Activated B cell treated with CpG ODN at 0.5 μM for 24 hours (primary cell): ENCODE measurements at regions of chr10 and their contacts with region 1.

Region 1: DNA sequence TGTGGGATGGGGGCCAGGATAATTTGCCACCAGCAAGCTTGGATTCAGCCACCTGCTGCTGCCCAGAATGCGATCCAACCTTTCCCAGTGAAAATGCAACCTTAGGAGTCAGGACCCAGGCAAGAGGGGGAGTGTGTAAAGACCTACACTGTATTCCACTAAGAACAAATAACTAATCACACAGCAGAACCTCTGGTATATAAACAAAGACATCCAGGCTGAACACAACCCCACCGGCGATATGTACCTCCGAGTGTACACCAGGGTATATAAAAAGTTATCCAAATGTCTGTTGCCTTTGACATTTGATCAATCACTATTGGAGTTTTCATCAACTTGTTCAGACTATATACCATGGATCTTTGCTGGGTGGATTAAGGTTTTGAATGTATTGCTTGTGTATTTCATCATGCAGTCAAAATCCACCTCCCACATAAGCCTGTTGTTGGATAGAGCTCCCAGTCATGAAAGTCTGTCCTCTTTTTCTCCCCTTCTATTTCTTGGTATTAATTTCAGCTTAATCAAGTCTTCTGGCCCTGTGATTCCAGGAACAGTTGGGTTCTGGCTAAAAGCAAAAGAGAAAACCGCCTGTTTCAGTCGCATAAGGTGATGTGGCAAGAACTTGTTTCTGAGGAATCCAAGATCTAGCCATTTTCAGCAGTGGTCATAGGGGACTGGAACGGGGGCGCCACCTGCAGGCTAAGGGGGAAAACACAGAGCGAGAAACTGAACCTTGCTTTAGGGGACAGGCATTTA is 290.7 kb downstream of the CCDC3 start:
- DNase-seq: peak; percentile 68
- ATAC-seq: peak; percentile 93
- H3K4me3 Mint-ChIP-seq: no peak overlapping the region
- H3K27ac Mint-ChIP-seq: peak overlapping the region; percentile 54
- H3K4me1 Mint-ChIP-seq: peaks cover 23% of the 10 kb centered on the region
- H3K27me3 Mint-ChIP-seq: no peaks in the 10 kb centered on the region
- CTCF ChIP-seq: no peak

Region 2: DNA sequence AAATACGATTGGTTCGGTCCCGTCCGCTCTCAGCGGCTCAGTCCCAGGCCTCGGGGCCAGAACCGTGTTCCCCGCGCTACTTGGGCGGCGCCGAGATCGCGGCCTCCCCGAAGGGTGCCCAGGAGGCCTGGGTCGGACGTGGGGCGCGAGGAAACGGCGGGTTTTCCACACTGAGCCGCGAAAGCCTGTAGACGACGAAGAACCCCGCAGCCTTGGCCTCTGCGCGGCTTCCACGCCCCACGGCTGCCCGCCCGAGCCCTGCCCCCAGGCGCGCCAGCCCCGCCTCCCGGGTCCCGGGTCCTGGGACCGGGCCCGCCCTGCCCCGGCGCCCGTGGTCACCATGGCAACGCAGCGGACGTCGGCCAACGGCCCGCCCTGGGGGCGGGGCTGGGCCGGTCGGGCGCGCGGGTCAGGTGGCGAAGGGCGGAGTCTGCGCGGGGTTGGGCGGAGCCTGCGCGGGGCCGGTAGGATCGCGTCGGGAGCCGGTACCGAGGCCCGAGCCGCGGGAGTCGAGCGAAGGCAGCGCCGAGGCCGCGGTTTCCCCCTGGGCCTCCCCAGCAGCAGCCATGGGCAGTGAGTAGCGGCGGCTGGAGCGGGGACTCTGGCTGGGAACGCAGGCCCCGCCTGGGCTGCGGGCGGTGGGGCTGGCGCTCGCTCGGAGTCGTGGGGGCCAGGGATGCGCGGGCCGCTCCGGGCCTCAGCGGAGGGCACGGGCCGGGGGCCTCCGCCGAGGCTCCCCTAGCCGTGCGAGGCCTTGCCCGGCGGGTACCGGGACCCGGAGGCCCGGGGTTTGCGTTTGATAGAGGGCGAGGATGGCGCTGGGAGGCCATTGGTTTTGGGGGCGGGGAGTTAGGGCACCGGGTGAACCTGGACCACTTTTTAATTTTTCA is 581.3 kb before region 1 on chr10 and contains the start of gene SEC61A2:
- CTCF ChIA-PET with region 1: no interaction called
- POLR2A ChIA-PET with region 1: no interaction called
- intact Hi-C with region 1: loop called (anchors 1 kb)
- DNase-seq: peak; percentile 100
- ATAC-seq: peak; percentile 89
- H3K4me3 Mint-ChIP-seq: peak within 1 kb of the TSS; percentile 90
- H3K27ac Mint-ChIP-seq: peak within 1 kb of the TSS; percentile 88
- H3K4me1 Mint-ChIP-seq: peaks cover 15% of the 10 kb centered on the region
- H3K27me3 Mint-ChIP-seq: no peaks in the 10 kb centered on the region
- CTCF ChIP-seq: no peak
- total RNA-seq, gene SEC61A2: 13.3 and 20.8 TPM in 2 replicates

Region 3: GRCh38 chr10:12252882-12253546 is 457.8 kb before region 1 on chr10:
- CTCF ChIA-PET with region 1: interaction called, 17 read pairs
- POLR2A ChIA-PET with region 1: no interaction called
- intact Hi-C with region 1: loop called (anchors 1 kb)
- DNase-seq: no peak
- ATAC-seq: peak; percentile 98
- H3K4me3 Mint-ChIP-seq: peak overlapping the region; percentile 55
- H3K27ac Mint-ChIP-seq: peak overlapping the region; percentile 74
- H3K4me1 Mint-ChIP-seq: peaks cover 10% of the 10 kb centered on the region
- H3K27me3 Mint-ChIP-seq: no peaks in the 10 kb centered on the region
- CTCF ChIP-seq: peak; percentile 21

Region 4: DNA sequence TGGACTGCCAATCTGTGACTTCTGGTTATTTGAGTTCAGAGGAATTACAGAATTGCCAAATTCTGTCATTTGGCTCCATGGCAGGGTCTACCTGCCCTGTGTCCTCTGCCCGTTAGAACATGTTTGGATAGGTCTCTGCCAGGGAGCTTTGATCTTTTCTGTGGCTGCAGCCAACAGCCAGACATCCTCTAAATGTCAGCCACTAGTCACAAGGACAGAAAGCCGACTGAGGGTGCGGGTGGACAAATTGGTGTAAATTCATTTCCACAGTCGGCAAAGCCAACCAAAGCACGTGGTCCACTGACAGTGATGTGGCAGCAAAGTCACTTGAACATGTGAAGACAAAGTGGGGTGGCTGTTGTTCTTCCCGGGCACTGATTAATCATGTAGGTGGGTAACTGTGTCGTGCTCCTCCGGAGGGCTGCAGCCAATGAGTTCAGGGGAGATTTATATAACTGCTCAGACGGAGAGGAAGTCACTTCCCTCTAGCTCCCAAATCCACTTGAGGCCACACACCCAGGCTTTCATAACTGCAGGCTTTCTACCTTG is 388.1 kb before region 1 on chr10:
- CTCF ChIA-PET with region 1: no interaction called
- POLR2A ChIA-PET with region 1: no interaction called
- intact Hi-C with region 1: loop called (anchors 1 kb)
- DNase-seq: no peak
- ATAC-seq: no peak
- H3K4me3 Mint-ChIP-seq: peak overlapping the region; percentile 20
- H3K27ac Mint-ChIP-seq: no peak overlapping the region
- H3K4me1 Mint-ChIP-seq: peaks cover 20% of the 10 kb centered on the region
- H3K27me3 Mint-ChIP-seq: no peaks in the 10 kb centered on the region
- CTCF ChIP-seq: no peak

Region 5: GRCh38 chr10:12471142-12471541 is 239.6 kb before region 1 on chr10:
- CTCF ChIA-PET with region 1: no interaction called
- POLR2A ChIA-PET with region 1: no interaction called
- intact Hi-C with region 1: no loop called
- DNase-seq: no peak
- ATAC-seq: no peak
- H3K4me3 Mint-ChIP-seq: no peak overlapping the region
- H3K27ac Mint-ChIP-seq: no peak overlapping the region
- H3K4me1 Mint-ChIP-seq: peaks cover 54% of the 10 kb centered on the region
- H3K27me3 Mint-ChIP-seq: no peaks in the 10 kb centered on the region
- CTCF ChIP-seq: no peak

Region 6: GRCh38 chr10:12868229-12868628 is 157.5 kb after region 1 on chr10:
- CTCF ChIA-PET with region 1: no interaction called
- POLR2A ChIA-PET with region 1: no interaction called
- intact Hi-C with region 1: no loop called
- DNase-seq: no peak
- ATAC-seq: no peak
- H3K4me3 Mint-ChIP-seq: no peak overlapping the region
- H3K27ac Mint-ChIP-seq: no peak overlapping the region
- H3K4me1 Mint-ChIP-seq: peaks cover 1% of the 10 kb centered on the region
- H3K27me3 Mint-ChIP-seq: peaks cover 1% of the 10 kb centered on the region
- CTCF ChIP-seq: no peak

Region 7: DNA sequence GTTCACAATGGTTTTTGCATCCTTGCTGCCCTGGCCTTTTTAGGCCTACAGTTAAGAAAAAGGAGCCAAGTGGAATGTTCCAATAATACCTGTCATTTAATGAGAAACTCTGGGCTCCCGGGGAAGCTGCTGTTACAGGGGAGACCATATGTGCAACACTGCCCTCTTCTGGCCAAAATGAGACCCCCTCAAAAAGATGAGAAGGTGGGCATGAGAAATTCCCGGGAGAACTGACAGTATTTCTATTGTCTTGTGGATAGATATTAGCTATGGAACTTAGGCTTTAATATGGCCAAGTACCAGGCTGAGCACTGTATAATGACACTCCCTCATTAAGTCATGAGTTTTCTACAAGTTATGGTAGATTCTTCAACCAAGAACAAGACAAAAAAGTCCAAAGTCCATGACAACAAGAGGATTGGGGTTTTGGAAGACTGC is 191.4 kb after region 1 on chr10:
- CTCF ChIA-PET with region 1: interaction called, 11 read pairs
- POLR2A ChIA-PET with region 1: no interaction called
- intact Hi-C with region 1: loop called (anchors 1 kb)
- DNase-seq: peak; percentile 18
- ATAC-seq: no peak
- H3K4me3 Mint-ChIP-seq: no peak overlapping the region
- H3K27ac Mint-ChIP-seq: no peak overlapping the region
- H3K4me1 Mint-ChIP-seq: no peaks in the 10 kb centered on the region
- H3K27me3 Mint-ChIP-seq: peaks cover 23% of the 10 kb centered on the region
- CTCF ChIP-seq: peak; percentile 82